Activated B cell treated with CpG ODN at 0.5 μM for 24 hours (primary cell): ENCODE measurements at regions of chr16 and their contacts with region 1.

Region 1: DNA sequence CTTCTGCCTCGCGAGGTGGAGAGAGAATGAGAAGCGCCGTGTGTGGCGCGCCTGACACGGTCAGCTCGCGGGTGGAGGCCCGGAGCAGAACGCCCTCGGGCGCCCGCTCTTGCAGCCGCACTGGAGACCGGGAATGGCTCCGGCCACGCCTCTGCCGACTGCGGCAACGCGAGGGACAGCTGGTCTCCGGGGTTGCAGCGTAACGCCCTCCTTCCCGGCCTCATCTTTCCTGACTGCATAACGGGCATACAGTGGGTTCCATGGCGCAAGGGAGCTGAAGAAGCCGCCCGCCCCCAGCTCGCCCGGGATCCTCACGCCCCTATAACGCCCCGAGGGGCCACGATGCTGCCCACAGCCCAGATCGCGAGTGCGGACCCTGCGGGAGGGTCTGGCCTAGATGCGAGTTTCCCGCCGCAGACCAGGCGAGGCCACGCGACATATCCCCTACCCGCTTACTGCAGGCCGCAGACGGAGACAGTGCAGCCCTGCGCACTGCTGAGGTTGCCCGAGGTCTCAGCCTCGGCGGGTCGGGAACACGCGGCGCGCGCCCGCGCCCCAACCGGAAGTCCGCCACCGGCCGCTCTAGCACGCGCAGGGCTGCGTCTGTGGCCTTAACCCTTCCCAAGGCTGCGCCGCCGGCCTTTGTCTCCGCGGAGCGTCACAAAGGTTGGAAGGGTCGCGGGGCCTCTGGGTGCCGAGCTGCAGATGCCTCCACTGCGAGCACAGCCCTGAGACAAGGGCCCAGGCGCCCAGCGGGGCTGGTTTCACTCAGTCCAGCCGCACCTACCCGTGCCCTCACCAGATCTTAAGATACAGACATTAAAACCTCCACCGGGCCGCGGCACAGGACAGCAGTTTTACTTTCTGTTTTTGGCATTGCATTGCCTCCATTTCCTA is 18.8 kb downstream of the BCL7C start:
- DNase-seq: peak; percentile 90
- ATAC-seq: peak; percentile 83
- H3K4me3 Mint-ChIP-seq: peak overlapping the region; percentile 94
- H3K27ac Mint-ChIP-seq: peak overlapping the region; percentile 95
- H3K4me1 Mint-ChIP-seq: peaks cover 37% of the 10 kb centered on the region
- H3K27me3 Mint-ChIP-seq: no peaks in the 10 kb centered on the region
- CTCF ChIP-seq: no peak

Region 2: DNA sequence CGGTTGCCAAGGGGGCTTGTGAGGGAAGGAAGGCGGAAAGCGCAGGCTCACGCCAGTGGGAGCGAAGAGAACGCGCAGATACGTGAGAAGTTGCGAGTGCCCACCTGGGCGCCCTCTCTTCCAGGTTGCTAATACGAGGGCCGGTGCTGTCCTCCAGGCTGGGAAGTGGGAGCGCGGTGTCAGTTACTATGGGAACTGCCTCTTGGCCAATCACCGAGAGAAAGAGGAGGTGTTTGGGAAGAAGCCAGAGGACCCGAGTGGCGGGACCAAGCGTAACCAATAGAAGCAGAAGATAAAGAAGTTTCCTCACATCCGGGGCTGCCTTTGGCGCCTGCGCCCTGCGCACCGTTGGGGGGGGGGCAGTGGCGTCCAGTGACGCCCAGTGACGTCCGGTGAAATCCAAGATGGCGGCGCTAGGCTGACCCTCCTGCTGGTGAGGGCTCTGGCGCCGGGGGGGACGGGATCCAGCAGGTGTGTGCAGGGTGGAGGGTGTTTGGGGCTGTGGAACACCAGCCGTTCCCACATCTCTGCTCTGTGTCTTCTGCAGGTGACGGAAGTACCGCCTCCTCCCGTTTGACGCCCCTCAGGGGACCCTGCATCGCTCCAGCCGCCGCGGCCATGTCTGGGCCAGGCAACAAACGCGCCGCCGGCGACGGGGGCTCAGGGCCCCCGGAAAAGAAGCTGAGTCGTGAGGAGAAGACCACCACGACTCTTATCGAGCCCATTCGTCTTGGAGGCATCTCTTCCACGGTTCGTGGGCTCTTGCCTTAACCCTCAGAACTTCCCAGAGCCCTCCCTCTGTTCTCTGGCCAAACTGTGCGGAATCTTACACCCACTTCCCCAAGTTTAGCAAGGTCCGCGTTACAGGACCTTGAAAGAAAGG is 112.9 kb before region 1 on chr16 and contains the starts of genes CFAP119 and RNF40:
- CTCF ChIA-PET with region 1: no interaction called
- POLR2A ChIA-PET with region 1: no interaction called
- intact Hi-C with region 1: loop called (anchors 2 kb)
- DNase-seq: peak; percentile 94
- ATAC-seq: peak; percentile 89
- H3K4me3 Mint-ChIP-seq: peak within 1 kb of the TSS; percentile 93
- H3K27ac Mint-ChIP-seq: peak within 1 kb of the TSS; percentile 87
- H3K4me1 Mint-ChIP-seq: peaks cover 42% of the 10 kb centered on the region
- H3K27me3 Mint-ChIP-seq: no peaks in the 10 kb centered on the region
- CTCF ChIP-seq: no peak
- total RNA-seq, gene CFAP119: 6.2 and 8.8 TPM in 2 replicates
- total RNA-seq, gene RNF40: 99.6 and 117 TPM in 2 replicates

Region 3: DNA sequence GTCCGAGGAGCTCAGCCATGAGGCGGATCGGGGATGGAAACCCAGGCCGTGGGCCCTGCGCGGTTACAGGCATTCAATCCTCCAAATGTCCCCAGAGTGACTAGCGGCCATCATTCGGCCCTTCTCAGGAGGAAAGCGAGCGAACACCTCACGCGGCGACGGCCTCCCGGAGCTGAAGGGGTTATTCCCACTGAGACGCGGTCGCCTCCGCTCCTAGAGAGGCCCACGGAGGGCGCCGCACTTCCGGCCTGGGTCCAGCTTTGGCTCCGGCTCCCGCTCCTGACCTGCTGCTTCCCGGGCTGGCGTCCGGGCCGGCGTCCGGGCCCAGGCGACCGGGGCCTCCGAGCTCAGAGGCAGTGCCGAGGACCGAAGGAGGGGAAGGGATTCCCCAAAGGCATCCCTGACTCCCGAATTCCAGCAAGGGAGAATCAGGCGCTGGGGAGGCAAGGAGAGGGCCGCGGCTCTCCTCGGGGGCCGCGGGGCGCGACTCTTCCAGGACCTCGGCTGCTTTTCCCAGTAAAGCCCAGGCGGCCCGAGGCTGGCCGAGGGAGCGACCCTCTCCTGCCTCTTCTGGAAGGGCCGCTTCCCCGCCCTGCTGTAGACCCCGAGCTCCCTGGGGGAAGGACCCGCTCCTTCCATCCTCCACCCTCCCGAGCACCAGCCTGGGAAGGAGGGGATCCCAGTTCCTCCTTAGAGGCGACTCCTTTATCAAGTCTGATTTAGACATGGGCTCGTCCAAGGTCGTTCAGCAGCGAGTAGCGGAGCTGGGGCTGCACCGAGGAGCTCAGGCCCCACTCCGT is 69.5 kb before region 1 on chr16:
- CTCF ChIA-PET with region 1: interaction called, 4 read pairs
- POLR2A ChIA-PET with region 1: interaction called, 27 read pairs
- intact Hi-C with region 1: loop called (anchors 1 kb)
- DNase-seq: peak; percentile 54
- ATAC-seq: peak; percentile 73
- H3K4me3 Mint-ChIP-seq: peak overlapping the region; percentile 82
- H3K27ac Mint-ChIP-seq: peak overlapping the region; percentile 30
- H3K4me1 Mint-ChIP-seq: peaks cover 22% of the 10 kb centered on the region
- H3K27me3 Mint-ChIP-seq: no peaks in the 10 kb centered on the region
- CTCF ChIP-seq: no peak

Region 4: DNA sequence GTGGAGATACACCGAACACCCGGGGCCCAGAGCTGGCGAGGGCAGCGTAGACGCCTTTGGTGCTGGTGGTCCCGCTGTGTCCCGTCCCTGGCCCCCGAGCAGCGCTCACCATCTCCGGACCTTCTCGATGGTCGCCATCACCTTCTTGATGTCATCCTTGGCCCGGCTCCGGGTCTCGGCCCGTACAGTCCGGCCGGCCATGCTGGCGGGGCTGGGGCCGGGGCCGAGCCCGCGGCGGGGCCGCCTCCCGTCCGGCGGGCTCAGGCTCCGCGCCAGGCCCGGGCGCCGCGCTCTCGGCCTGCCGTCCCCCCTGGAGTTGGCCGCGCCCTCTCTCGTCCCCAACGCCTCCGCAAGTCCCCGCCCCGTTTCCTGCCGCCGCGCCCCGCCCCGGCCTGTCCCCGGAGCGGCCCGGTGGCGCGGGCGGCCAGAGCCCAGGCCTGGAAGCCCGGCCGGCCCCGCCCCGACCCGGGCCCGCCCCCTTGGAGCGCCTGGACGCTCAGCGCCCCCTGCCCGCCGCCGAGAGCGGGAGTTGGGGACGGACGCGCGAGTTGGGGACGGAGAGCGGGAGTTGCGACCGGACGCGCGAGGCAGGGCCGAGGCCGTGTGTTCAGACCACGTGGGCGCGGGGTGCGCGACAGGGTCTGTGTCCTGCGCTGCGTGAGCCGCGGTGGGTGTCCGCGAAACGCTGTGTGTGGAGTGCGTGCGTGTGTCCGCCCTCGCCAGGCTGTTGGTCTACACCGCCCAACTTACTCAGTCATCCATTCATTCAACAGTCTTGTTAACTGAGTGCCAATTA is 18.9 kb after region 1 on chr16 and contains the start of gene BCL7C:
- CTCF ChIA-PET with region 1: no interaction called
- POLR2A ChIA-PET with region 1: interaction called, 43 read pairs
- intact Hi-C with region 1: loop called (anchors 1 kb)
- DNase-seq: peak; percentile 86
- ATAC-seq: peak; percentile 76
- H3K4me3 Mint-ChIP-seq: peak within 1 kb of the TSS; percentile 84
- H3K27ac Mint-ChIP-seq: peak within 1 kb of the TSS; percentile 88
- H3K4me1 Mint-ChIP-seq: peaks cover 48% of the 10 kb centered on the region
- H3K27me3 Mint-ChIP-seq: no peaks in the 10 kb centered on the region
- CTCF ChIP-seq: no peak
- total RNA-seq, gene BCL7C: 32.2 and 35.7 TPM in 2 replicates

Region 5: DNA sequence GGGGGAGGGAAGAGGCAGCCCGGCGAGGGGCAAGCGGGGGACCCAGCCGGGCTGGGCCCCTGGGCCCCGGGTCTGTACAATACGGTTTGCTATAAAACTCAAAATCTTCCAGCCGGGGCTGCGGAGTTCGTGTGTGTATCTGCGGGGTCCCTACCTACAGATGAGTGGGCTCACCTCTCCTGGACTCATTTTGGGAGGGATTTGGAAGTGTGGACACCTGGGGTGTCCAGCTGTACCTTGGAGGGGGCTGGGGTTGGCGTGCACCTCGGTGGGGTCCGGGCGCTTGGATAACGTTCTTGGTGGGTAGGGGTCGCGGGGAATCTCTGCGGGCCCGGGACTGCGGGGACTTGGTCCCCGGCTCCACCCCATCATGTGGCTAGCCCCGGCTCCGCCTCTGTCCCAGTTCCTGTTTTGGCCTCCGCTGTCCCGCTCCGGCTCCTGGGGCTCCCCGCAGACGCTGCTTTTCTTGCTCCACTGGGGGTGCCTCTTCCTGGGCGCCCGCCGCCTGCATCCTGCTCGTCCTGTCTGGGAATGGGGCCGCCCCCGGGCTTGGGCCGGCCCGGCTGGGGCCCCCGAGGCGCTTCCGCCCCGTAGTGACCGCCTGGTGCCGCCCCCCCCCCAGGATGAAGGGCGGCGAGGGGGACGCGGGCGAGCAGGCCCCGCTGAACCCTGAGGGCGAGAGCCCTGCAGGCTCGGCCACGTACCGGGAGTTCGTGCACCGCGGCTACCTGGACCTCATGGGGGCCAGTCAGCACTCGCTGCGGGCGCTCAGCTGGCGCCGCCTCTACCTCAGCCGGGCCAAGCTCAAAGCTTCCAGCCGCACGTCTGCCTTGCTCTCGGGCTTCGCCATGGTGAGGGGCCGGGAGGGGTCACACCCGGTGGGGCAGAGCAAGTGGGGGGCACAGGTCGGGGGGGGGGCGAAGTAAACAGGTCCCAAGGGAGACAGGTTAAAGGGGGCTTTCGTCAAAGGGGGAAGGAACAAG is 73.9 kb after region 1 on chr16 and contains the start of gene ORAI3:
- CTCF ChIA-PET with region 1: no interaction called
- POLR2A ChIA-PET with region 1: interaction called, 13 read pairs
- intact Hi-C with region 1: no loop called
- DNase-seq: peak; percentile 73
- ATAC-seq: peak; percentile 82
- H3K4me3 Mint-ChIP-seq: peak within 1 kb of the TSS; percentile 92
- H3K27ac Mint-ChIP-seq: peak within 1 kb of the TSS; percentile 86
- H3K4me1 Mint-ChIP-seq: peaks cover 27% of the 10 kb centered on the region
- H3K27me3 Mint-ChIP-seq: no peaks in the 10 kb centered on the region
- CTCF ChIP-seq: no peak
- total RNA-seq, gene ORAI3: 25.1 and 30.6 TPM in 2 replicates